ENCODE measurements at regions of chr19 and their contacts with region 1.

Region 1: DNA sequence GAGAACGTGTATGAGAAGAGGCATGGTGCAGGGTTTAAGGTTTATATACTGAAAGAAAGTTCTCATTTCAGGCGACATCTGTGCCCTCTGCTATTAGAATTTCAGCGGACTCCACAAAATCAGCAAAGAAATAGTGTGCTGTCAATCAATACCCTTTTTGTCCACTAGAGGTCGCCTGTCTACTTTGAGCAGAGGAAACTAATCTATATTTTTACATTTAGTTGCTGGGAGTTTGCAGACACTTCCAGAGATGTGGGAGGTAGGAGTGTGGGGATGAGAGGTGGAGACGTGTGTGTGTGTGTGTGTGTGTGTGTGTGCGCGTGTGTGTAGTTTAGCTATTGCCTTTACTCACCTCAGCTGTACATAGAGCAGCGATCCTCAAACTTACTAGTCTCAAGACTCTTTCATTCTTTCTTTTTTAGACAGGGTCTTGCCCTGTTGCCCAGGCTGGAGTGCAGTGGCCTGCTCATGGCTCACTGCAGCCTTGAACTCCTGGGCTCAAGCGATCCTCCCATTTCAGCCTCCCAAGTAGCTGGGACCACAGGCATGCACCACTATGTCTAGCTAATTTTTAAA is 9.7 kb downstream of the INAFM1 start:
- DNase-seq: peak; percentile 82
- ATAC-seq: no peak
- H3K4me3 ChIP-seq: no peak overlapping the region
- H3K4me3 Mint-ChIP-seq: no peak overlapping the region
- H3K27ac ChIP-seq: no peak overlapping the region
- H3K27ac Mint-ChIP-seq: no peak overlapping the region
- H3K4me1 ChIP-seq: peaks cover 15 to 17% of the 10 kb centered on the region in 2 donors
- H3K4me1 Mint-ChIP-seq: peaks cover 20% of the 10 kb centered on the region
- H3K27me3 ChIP-seq: no peaks in the 10 kb centered on the region
- H3K27me3 Mint-ChIP-seq: no peaks in the 10 kb centered on the region
- CTCF ChIP-seq: peak; percentile 81

Region 2: DNA sequence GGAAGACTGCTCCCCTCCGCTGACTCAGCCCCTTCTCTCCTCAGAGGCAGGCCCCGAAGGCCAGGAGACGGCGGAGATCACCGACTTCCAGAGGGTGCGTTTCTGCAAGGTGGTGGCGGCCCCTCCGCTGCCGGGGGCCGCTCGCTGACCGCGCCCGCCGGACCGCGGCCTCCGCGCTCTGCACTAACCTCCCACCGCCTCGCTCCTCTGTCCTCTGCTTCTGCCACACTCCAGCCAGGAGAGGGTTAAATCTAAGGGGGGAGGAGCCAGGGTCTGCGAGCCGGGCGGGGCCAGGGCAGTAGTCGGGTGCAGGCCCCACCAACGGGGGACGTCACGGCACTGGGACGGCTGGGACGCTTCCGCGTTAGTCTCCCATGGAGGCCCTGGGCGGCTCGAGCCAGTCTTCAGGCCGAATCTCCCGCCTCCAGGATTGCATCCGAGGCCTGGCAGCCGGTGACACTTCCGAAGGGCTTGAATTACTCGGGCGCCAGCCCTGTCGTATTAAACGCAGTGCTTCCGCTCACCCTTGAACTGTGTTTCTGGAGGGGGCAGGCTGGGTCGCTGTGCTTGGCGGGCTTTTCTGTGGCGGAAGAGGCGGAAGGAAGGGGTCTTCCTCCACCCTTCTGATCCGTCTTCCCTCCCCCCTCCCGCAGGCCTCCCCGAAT is 11.0 kb before region 1 on chr19:
- CTCF ChIA-PET with region 1: interaction called, 17 read pairs
- POLR2A ChIA-PET with region 1: interaction called, 7 read pairs
- intact Hi-C with region 1: no loop called
- DNase-seq: peak; percentile 91
- ATAC-seq: peak; percentile 56
- H3K4me3 ChIP-seq: peak overlapping the region; percentile 54 to 99 (median 96)
- H3K4me3 Mint-ChIP-seq: peak overlapping the region; percentile 97
- H3K27ac ChIP-seq: peak overlapping the region; percentile 94 to 98
- H3K27ac Mint-ChIP-seq: peak overlapping the region; percentile 99
- H3K4me1 ChIP-seq: peaks cover 12 to 22% of the 10 kb centered on the region in 2 donors
- H3K4me1 Mint-ChIP-seq: peaks cover 22% of the 10 kb centered on the region
- H3K27me3 ChIP-seq: no peaks in the 10 kb centered on the region
- H3K27me3 Mint-ChIP-seq: no peaks in the 10 kb centered on the region
- CTCF ChIP-seq: no peak

Region 3: GRCh38 chr19:47296036-47296435 is 11.6 kb after region 1 on chr19:
- CTCF ChIA-PET with region 1: interaction called, 15 read pairs
- POLR2A ChIA-PET with region 1: no interaction called
- intact Hi-C with region 1: no loop called
- DNase-seq: peak; percentile 86
- ATAC-seq: peak; percentile 80
- H3K4me3 ChIP-seq: no peak overlapping the region
- H3K4me3 Mint-ChIP-seq: no peak overlapping the region
- H3K27ac ChIP-seq: no peak overlapping the region
- H3K27ac Mint-ChIP-seq: no peak overlapping the region
- H3K4me1 ChIP-seq: peaks cover 4 to 18% of the 10 kb centered on the region in 2 donors
- H3K4me1 Mint-ChIP-seq: peaks cover 13% of the 10 kb centered on the region
- H3K27me3 ChIP-seq: peaks cover 0 to 6% (median 1%) of the 10 kb centered on the region in 4 experiments
- H3K27me3 Mint-ChIP-seq: no peaks in the 10 kb centered on the region
- CTCF ChIP-seq: peak; percentile 78

Region 4: DNA sequence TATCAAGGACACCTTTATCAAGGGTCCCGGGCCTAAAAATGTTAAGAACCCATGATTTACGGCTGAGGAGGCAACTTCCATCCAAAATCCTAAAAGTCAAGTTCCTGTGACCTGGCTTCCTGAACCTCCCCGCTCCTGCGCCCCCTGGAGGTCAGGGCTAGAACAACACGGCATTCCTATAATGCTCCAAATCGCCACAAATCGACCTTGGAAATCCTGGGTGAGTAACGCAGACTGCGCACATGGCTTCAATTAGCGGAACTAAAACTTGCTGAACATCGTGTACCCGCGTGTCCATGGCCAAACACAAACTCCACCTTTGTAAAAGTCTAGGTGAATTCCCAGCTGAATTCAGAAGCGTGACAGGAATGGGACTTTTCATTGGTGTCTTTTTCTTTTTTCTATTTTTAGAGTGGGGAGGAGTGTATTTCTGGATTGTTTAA is 20.9 kb after region 1 on chr19:
- CTCF ChIA-PET with region 1: interaction called, 19 read pairs
- POLR2A ChIA-PET with region 1: no interaction called
- intact Hi-C with region 1: no loop called
- DNase-seq: peak; percentile 71
- ATAC-seq: peak; percentile 56
- H3K4me3 ChIP-seq: no peak overlapping the region
- H3K4me3 Mint-ChIP-seq: peak overlapping the region; percentile 12
- H3K27ac ChIP-seq: no peak overlapping the region
- H3K27ac Mint-ChIP-seq: no peak overlapping the region
- H3K4me1 ChIP-seq: peaks cover 11% of the 10 kb centered on the region in 2 donors
- H3K4me1 Mint-ChIP-seq: peaks cover 15% of the 10 kb centered on the region
- H3K27me3 ChIP-seq: peaks cover 0 to 21% (median 2%) of the 10 kb centered on the region in 4 experiments
- H3K27me3 Mint-ChIP-seq: peaks cover 18% of the 10 kb centered on the region
- CTCF ChIP-seq: peak; percentile 87

Region 5: GRCh38 chr19:47391510-47392223 is 107.3 kb after region 1 on chr19:
- CTCF ChIA-PET with region 1: interaction called, 12 read pairs
- POLR2A ChIA-PET with region 1: no interaction called
- intact Hi-C with region 1: loop called (anchors 1 kb)
- DNase-seq: peak; percentile 77
- ATAC-seq: peak; percentile 68
- H3K4me3 ChIP-seq: no peak overlapping the region
- H3K4me3 Mint-ChIP-seq: no peak overlapping the region
- H3K27ac ChIP-seq: no peak overlapping the region
- H3K27ac Mint-ChIP-seq: no peak overlapping the region
- H3K4me1 ChIP-seq: peaks cover 0 to 7% of the 10 kb centered on the region in 2 donors
- H3K4me1 Mint-ChIP-seq: peaks cover 7% of the 10 kb centered on the region
- H3K27me3 ChIP-seq: peaks cover 0 to 3% (median 0%) of the 10 kb centered on the region in 4 experiments
- H3K27me3 Mint-ChIP-seq: peaks cover 33% of the 10 kb centered on the region
- CTCF ChIP-seq: peak; percentile 93

Region 6: DNA sequence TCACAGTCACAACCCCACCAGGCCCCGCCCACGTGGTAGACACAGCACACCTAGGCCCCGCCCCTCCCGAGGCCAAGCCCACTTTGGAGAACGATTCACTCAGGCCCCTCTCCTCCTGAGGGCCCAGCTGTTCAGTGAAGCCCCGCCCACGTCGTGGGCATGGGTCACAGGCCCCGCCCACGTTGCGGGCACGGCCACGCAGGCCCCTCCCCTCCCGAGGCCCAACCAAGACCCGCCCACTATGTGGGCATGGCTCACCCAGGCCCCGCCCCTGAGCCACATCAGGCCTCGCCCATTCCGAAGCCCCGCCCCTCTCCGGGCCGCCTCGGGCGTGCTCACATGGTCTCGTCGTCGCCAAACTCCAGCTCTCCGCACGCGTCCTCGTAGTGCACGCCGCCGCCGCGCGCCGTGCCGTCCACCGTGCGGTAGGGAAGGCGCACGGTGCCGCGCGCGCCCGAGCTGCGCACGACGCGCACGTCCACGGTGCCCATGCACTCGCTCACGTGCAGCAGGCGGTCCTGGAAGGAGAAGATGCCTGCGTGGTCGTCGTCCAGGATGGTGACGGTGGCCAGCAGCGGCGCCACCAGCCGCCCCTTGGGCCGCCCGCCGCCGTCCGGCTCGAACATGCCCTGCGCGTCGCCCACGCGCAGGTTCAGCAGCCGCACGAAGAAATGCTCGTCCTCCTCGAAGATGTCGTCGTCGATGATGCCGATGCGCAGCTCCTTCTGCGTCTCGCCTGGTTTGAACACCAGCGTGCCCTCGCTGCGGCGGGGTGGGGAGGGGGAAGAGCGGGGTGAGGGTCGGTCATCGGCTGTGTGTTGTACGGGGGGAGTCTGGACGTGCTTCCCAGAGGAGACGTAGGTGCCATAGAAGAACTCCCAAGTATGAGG is 163.3 kb after region 1 on chr19:
- CTCF ChIA-PET with region 1: no interaction called
- POLR2A ChIA-PET with region 1: no interaction called
- intact Hi-C with region 1: no loop called
- DNase-seq: peak; percentile 54
- ATAC-seq: no peak
- H3K4me3 ChIP-seq: peak overlapping the region in 1 of 5 experiments; percentile 9
- H3K4me3 Mint-ChIP-seq: peak overlapping the region; percentile 45
- H3K27ac ChIP-seq: no peak overlapping the region
- H3K27ac Mint-ChIP-seq: no peak overlapping the region
- H3K4me1 ChIP-seq: peaks cover 32 to 42% of the 10 kb centered on the region in 2 donors
- H3K4me1 Mint-ChIP-seq: peaks cover 28% of the 10 kb centered on the region
- H3K27me3 ChIP-seq: peaks cover 0 to 70% (median 43%) of the 10 kb centered on the region in 4 experiments
- H3K27me3 Mint-ChIP-seq: peaks cover 77% of the 10 kb centered on the region
- CTCF ChIP-seq: no peak